HCT116 (cell line): ENCODE measurements at regions of chr2 and their contacts with region 1.

Region 1: DNA sequence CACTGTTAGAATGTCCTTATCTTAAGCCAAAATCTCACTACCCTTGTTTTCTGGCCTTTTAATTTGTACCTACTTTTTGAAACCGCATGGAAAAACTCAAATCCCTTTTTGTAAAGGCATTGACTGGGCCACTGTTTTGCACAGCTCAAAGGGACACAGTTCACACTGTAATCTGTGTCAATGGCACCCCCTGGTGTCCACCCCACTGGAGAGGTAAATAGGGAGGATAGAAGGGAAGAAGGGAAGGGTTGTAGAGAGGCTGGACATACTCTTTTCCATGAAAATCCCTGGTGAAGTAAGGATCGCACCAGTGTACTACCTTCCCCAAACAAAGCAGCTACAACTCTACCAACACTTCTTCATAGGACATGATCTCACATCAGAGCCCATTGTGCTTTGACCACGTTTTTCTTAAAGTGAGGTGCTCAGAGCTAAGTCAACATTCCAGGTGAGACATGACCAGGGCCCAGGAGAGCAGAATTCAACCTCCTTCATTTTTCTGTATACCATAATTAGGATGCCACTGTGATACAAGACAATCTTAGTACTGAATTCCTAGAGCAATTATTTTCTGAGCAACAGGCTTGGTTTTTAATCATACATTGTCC is 92.4 kb upstream of the RMDN2 start:
- DNase-seq: peak; percentile 71
- ATAC-seq: peak; percentile 99
- H3K4me3 ChIP-seq: no peak overlapping the region
- H3K27ac ChIP-seq: no peak overlapping the region
- H3K4me1 ChIP-seq: peaks cover 4 to 6% of the 10 kb centered on the region in 2 experiments; a peak in 1 of 4 replicates
- H3K27me3 ChIP-seq: no peaks in the 10 kb centered on the region
- CTCF ChIP-seq: peak; percentile 84 to 94 (median 85)
- POLR2A ChIP-seq: no peak
- RAD21 ChIP-seq: peak; percentile 98

Region 2: DNA sequence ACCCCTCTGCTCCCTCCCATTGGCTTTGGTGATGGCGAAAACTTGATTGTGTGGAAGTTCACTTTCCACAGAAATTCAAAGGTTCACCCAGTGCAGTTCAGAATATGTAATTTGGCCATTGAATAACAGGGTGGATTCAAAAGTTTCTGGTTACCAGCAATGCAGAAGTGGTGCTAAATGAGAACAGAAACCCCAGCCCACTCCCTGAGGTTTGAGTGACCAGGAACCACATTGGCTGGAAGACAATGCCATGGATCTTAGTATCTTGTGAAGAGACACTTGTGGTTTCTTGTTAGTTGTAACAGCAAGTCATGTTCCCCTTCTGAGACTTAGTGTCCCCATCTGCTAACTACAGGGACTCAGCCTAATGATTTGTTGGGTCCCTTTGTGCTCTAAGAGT is 438.4 kb before region 1 on chr2:
- CTCF ChIA-PET with region 1: interaction called, 56 read pairs
- POLR2A ChIA-PET with region 1: interaction called, 9 read pairs
- RAD21 ChIA-PET with region 1: interaction called, 24 read pairs
- intact Hi-C with region 1: loop called (anchors 1 kb)
- DNase-seq: no peak
- ATAC-seq: no peak
- H3K4me3 ChIP-seq: no peak overlapping the region
- H3K27ac ChIP-seq: no peak overlapping the region
- H3K4me1 ChIP-seq: peaks cover 3 to 18% of the 10 kb centered on the region in 2 experiments; a peak in 3 of 4 replicates
- H3K27me3 ChIP-seq: no peaks in the 10 kb centered on the region
- CTCF ChIP-seq: no peak
- POLR2A ChIP-seq: no peak
- RAD21 ChIP-seq: no peak

Region 3: GRCh38 chr2:37402636-37403035 is 430.1 kb before region 1 on chr2:
- CTCF ChIA-PET with region 1: interaction called, 17 read pairs
- POLR2A ChIA-PET with region 1: no interaction called
- RAD21 ChIA-PET with region 1: no interaction called
- intact Hi-C with region 1: no loop called
- DNase-seq: no peak
- ATAC-seq: no peak
- H3K4me3 ChIP-seq: no peak overlapping the region
- H3K27ac ChIP-seq: no peak overlapping the region
- H3K4me1 ChIP-seq: no peaks in the 10 kb centered on the region
- H3K27me3 ChIP-seq: no peaks in the 10 kb centered on the region
- CTCF ChIP-seq: no peak
- POLR2A ChIP-seq: no peak
- RAD21 ChIP-seq: no peak

Region 4: GRCh38 chr2:37537316-37537715 is 295.4 kb before region 1 on chr2:
- CTCF ChIA-PET with region 1: no interaction called
- POLR2A ChIA-PET with region 1: no interaction called
- RAD21 ChIA-PET with region 1: no interaction called
- intact Hi-C with region 1: loop called (anchors 5 kb)
- DNase-seq: no peak
- ATAC-seq: no peak
- H3K4me3 ChIP-seq: no peak overlapping the region
- H3K27ac ChIP-seq: no peak overlapping the region
- H3K4me1 ChIP-seq: peaks cover 9 to 21% of the 10 kb centered on the region in 2 experiments; a peak in 3 of 4 replicates
- H3K27me3 ChIP-seq: no peaks in the 10 kb centered on the region
- CTCF ChIP-seq: no peak
- POLR2A ChIP-seq: no peak
- RAD21 ChIP-seq: no peak

Region 5: GRCh38 chr2:37982147-37982582 is 149.5 kb after region 1 on chr2:
- CTCF ChIA-PET with region 1: no interaction called
- POLR2A ChIA-PET with region 1: no interaction called
- RAD21 ChIA-PET with region 1: no interaction called
- intact Hi-C with region 1: no loop called
- DNase-seq: peak; percentile 44
- ATAC-seq: peak; percentile 67
- H3K4me3 ChIP-seq: no peak overlapping the region
- H3K27ac ChIP-seq: no peak overlapping the region
- H3K4me1 ChIP-seq: peaks cover 0 to 6% of the 10 kb centered on the region in 2 experiments; a peak in 2 of 4 replicates
- H3K27me3 ChIP-seq: no peaks in the 10 kb centered on the region
- CTCF ChIP-seq: peak; percentile 71 to 95 (median 82); a peak in 5 of 6 replicates
- POLR2A ChIP-seq: no peak
- RAD21 ChIP-seq: peak; percentile 75